ENCODE measurements at regions of chr1 and their contacts with region 1.

Region 1: GRCh38 chr1:8097077-8097799 is 71.1 kb upstream of the ERRFI1 start:
- DNase-seq: peak; percentile 85
- H3K4me3 Mint-ChIP-seq: peak overlapping the region; percentile 19
- H3K27ac Mint-ChIP-seq: peak overlapping the region; percentile 96
- H3K4me1 Mint-ChIP-seq: peaks cover 55% of the 10 kb centered on the region
- H3K27me3 Mint-ChIP-seq: no peaks in the 10 kb centered on the region
- CTCF ChIP-seq: no peak

Region 2: DNA sequence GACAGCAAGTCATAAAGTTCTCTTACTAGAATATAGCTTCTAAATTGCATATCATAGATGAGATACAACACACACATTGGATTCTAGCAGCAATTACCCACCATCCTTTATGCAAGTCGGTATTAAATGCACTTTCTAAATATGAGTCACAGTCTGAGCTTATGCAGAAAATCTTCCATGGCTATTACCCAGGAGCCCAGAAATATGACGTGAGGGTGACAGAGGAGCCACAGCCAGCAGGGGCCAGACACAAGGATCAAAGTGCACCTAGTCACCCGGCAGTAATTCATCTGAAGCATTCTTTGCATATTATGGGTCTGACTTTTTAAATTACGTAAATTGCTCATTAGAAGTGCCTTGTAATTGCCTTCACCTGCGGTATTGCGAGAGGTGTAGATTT is 796.3 kb before region 1 on chr1:
- CTCF ChIA-PET with region 1: no interaction called
- POLR2A ChIA-PET with region 1: no interaction called
- intact Hi-C with region 1: no loop called
- DNase-seq: peak; percentile 73
- H3K4me3 Mint-ChIP-seq: no peak overlapping the region
- H3K27ac Mint-ChIP-seq: no peak overlapping the region
- H3K4me1 Mint-ChIP-seq: peaks cover 24% of the 10 kb centered on the region
- H3K27me3 Mint-ChIP-seq: no peaks in the 10 kb centered on the region
- CTCF ChIP-seq: no peak

Region 3: GRCh38 chr1:8040586-8040985 is 56.7 kb before region 1 on chr1:
- CTCF ChIA-PET with region 1: no interaction called
- POLR2A ChIA-PET with region 1: interaction called, 10 read pairs
- intact Hi-C with region 1: loop called (anchors 2 kb)
- DNase-seq: peak; percentile 99
- H3K4me3 Mint-ChIP-seq: no peak overlapping the region
- H3K27ac Mint-ChIP-seq: peak overlapping the region; percentile 66
- H3K4me1 Mint-ChIP-seq: peaks cover 30% of the 10 kb centered on the region
- H3K27me3 Mint-ChIP-seq: no peaks in the 10 kb centered on the region
- CTCF ChIP-seq: no peak

Region 4: DNA sequence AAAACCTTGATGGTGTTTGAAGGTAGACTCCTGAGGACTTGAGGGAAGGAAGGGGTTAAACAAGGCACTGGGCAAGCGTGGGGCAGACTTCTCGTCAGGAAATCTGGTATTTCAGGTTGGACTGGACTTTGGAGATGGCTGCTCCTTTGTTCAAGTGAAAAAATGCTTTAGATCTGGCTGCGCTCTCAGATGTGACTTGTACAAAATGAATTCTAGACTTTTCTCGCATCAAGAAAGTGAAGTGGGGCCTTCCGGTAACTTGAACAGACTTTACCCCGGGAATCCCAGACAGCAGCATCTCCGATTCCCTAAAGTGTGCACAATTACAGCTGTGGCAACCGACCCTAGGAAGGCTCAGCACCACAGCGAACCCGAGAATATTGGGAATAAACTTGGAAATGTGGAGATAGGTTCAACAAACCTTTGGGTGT is 26.8 kb before region 1 on chr1:
- CTCF ChIA-PET with region 1: no interaction called
- POLR2A ChIA-PET with region 1: interaction called, 114 read pairs
- intact Hi-C with region 1: no loop called
- DNase-seq: no peak
- H3K4me3 Mint-ChIP-seq: no peak overlapping the region
- H3K27ac Mint-ChIP-seq: peak overlapping the region; percentile 97
- H3K4me1 Mint-ChIP-seq: peaks cover 31% of the 10 kb centered on the region
- H3K27me3 Mint-ChIP-seq: no peaks in the 10 kb centered on the region
- CTCF ChIP-seq: no peak

Region 5: GRCh38 chr1:8121261-8122170 is 24.3 kb after region 1 on chr1:
- CTCF ChIA-PET with region 1: no interaction called
- POLR2A ChIA-PET with region 1: interaction called, 14 read pairs
- intact Hi-C with region 1: no loop called
- DNase-seq: peak; percentile 93
- H3K4me3 Mint-ChIP-seq: peak overlapping the region; percentile 35
- H3K27ac Mint-ChIP-seq: peak overlapping the region; percentile 92
- H3K4me1 Mint-ChIP-seq: peaks cover 31% of the 10 kb centered on the region
- H3K27me3 Mint-ChIP-seq: no peaks in the 10 kb centered on the region
- CTCF ChIP-seq: no peak

Region 6: GRCh38 chr1:8154621-8155052 is 57.4 kb after region 1 on chr1:
- CTCF ChIA-PET with region 1: no interaction called
- POLR2A ChIA-PET with region 1: interaction called, 12 read pairs
- intact Hi-C with region 1: no loop called
- DNase-seq: peak; percentile 91
- H3K4me3 Mint-ChIP-seq: peak overlapping the region; percentile 13
- H3K27ac Mint-ChIP-seq: peak overlapping the region; percentile 98
- H3K4me1 Mint-ChIP-seq: peaks cover 14% of the 10 kb centered on the region
- H3K27me3 Mint-ChIP-seq: no peaks in the 10 kb centered on the region
- CTCF ChIP-seq: no peak

Region 7: DNA sequence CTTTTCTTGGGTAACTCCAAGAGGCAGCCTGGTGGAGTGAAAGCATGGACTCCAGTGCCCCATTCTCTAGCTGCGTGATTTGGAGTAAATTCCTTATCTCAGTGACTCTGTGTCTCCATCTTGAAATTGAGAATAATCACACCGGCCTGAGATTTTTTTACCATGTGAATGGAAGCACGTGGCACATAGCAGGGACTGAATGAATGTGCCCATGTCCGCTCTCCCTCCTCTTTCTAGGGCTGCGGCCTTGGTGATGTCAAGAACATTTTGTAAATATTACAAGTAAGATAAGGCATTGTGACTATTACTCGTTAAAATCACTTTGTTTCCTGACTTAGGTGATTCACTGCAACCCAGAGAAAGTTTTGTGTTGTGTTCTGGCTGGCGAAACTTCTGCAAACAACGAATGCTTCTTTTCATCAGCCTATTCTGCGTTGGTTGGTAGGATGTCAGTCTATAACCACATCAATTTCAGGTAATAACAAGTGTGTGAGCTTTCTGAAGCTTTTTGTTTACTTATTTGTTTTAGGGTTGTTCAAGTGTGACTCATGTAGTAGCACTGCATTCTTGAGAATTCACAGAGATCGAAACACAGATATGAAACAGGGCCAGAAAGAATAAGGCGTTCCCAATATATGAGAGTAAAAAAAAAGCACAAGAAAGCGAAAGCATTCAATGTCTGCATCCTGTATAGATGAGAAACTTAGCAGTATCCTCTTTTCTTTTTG is 85.0 kb after region 1 on chr1:
- CTCF ChIA-PET with region 1: no interaction called
- POLR2A ChIA-PET with region 1: interaction called, 6 read pairs
- intact Hi-C with region 1: loop called (anchors 1 kb)
- DNase-seq: peak; percentile 90
- H3K4me3 Mint-ChIP-seq: peak overlapping the region; percentile 33
- H3K27ac Mint-ChIP-seq: peak overlapping the region; percentile 96
- H3K4me1 Mint-ChIP-seq: peaks cover 24% of the 10 kb centered on the region
- H3K27me3 Mint-ChIP-seq: no peaks in the 10 kb centered on the region
- CTCF ChIP-seq: no peak

Region 8: DNA sequence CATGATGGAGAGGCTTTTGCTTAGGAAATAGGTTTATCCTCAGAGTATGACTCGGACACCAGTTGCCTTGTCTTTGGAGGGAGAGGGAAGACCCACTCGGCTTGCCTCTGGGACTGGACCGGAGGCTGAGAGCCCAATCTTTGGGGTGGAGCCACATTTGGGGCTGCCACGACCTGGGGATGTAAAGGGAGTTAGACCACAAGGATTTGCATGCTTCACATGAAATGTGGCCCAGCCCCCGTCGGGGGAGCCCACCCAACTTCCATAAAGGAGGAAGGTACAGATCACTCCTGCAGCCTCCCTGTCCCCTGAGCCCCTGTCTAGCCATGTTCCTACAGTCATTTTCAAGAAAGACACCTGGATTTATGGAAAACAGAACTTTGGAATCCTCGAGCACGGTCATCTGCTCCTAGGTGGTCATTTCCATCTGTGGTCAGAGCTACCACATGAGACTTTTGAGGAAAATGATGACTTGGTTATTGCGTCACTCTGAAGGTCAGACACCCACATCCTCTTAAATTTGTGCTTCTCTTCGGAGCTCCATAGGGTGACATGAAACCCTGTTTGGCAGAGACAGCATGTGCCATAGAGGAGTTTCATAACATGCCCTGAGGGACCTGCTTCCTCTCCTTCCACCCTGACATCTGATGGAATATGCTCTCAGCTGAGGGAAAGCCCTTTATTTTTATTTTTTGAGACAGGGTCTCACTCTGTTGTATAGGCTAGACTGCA is 121.3 kb after region 1 on chr1:
- CTCF ChIA-PET with region 1: no interaction called
- POLR2A ChIA-PET with region 1: no interaction called
- intact Hi-C with region 1: no loop called
- DNase-seq: peak; percentile 83
- H3K4me3 Mint-ChIP-seq: no peak overlapping the region
- H3K27ac Mint-ChIP-seq: no peak overlapping the region
- H3K4me1 Mint-ChIP-seq: peaks cover 20% of the 10 kb centered on the region
- H3K27me3 Mint-ChIP-seq: no peaks in the 10 kb centered on the region
- CTCF ChIP-seq: no peak

Region 9: GRCh38 chr1:8252266-8252951 is 155.2 kb after region 1 on chr1:
- CTCF ChIA-PET with region 1: no interaction called
- POLR2A ChIA-PET with region 1: no interaction called
- intact Hi-C with region 1: no loop called
- DNase-seq: no peak
- H3K4me3 Mint-ChIP-seq: no peak overlapping the region
- H3K27ac Mint-ChIP-seq: no peak overlapping the region
- H3K4me1 Mint-ChIP-seq: peaks cover 9% of the 10 kb centered on the region
- H3K27me3 Mint-ChIP-seq: no peaks in the 10 kb centered on the region
- CTCF ChIP-seq: no peak

Region 10: DNA sequence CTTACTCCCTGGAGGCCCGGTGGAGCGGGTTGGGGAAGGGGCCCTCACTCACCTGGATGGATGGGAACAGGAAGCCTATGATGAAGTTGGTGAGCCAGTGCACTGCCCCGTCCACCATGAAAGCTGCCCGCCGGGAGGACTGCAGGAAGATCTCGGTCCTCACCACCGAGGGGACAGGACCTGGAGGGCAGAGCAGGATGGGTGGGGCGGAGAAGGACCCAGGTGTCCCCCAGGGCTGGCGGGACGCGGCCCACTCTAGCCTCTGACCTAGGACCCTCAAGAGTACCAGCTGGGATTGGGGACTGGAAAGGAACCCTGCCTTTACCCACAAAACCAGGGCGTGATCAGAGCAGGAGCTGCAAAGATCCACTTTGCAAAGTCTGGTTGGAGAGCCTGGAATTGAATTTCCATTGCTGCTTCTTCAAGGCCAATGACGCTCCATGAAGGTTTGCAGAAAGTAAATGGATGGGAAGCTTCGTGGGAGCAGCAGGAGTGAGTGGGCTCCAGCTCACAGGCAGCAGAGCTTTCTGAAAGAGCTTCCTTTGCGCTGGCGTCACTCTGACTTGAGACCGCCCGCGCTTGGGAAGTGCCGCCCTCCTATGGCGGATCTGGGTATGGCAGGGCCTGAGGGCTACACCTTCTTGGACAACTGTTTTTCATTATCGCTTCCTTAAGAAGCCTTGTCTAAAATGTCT is 907.6 kb after region 1 on chr1:
- CTCF ChIA-PET with region 1: no interaction called
- POLR2A ChIA-PET with region 1: no interaction called
- intact Hi-C with region 1: no loop called
- DNase-seq: peak; percentile 78
- H3K4me3 Mint-ChIP-seq: no peak overlapping the region
- H3K27ac Mint-ChIP-seq: no peak overlapping the region
- H3K4me1 Mint-ChIP-seq: no peaks in the 10 kb centered on the region
- H3K27me3 Mint-ChIP-seq: no peaks in the 10 kb centered on the region
- CTCF ChIP-seq: peak; percentile 87

Measured in MCF 10A (cell line).